GM12878 (cell line): ENCODE measurements at regions of chr2 and their contacts with region 1.

Region 1: DNA sequence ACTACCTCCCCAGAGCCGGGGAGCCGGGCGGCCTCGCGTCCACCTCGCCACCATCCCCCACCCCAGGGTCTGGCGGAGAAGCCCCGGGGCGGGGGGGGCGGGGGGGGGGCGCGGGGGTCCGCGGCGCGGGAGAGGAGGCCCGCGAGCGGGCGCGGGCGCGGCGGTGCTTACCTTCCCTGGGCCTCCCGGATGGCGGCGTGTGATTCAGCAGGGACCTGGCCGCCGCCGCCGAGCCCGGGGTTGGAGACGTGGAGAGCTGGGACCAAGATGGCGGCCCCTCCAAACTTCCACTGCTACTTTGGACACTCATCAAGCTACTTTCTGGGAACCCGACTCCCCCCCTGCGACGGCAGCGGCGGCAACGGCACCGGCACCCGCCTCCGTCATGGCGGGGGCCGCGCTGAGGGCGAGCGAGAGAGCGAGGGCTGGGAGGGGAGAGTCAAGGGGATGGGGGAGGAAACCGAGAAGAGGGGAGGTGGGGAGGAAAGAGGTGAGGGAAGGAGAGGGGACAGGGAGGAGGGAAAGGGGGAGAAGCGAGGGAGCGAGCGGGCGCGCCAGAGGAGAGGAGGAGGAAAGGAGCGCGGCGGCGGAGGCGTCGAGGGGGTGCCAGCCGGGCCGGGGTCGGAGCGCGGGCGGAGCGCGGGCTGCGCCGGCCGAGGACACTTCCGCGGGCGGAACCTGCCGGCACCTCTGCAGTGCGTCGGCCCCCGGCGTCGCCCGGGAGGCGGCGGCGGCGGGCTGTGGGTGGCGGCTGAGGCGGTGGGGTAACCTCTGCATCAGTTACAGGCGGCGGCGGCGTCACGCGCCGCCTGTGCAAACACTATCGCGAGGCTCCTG is at the start of gene TLK1:
- DNase-seq: no peak
- ATAC-seq: peak; percentile 64
- H3K4me3 ChIP-seq: peak within 1 kb of the TSS; percentile 91
- H3K27ac ChIP-seq: peak within 1 kb of the TSS; percentile 96
- H3K4me1 ChIP-seq: peaks cover 20% of the 10 kb centered on the region
- H3K27me3 ChIP-seq: no peaks in the 10 kb centered on the region
- CTCF ChIP-seq: peak in 1 of 3 experiments; percentile 14; a peak in 1 of 6 replicates
- EP300 ChIP-seq: no peak
- POLR2A ChIP-seq: peak; percentile 79
- RAD21 ChIP-seq: peak; percentile 39; the same call in 1 of the 2 replicates
- polyA plus RNA-seq, gene TLK1: 42.5 to 126 TPM

Region 2: GRCh38 chr2:170973492-170974303 is 186.6 kb before region 1 on chr2:
- CTCF ChIA-PET with region 1: interaction called, 15 read pairs
- POLR2A ChIA-PET with region 1: no interaction called
- RAD21 ChIA-PET with region 1: interaction called, 6 read pairs
- SMC1A ChIA-PET with region 1: interaction called, 5 read pairs
- in situ Hi-C with region 1: no loop called
- intact Hi-C with region 1: loop called (anchors 1 kb)
- DNase-seq: peak; percentile 64
- ATAC-seq: peak; percentile 97
- H3K4me3 ChIP-seq: peak overlapping the region; percentile 78
- H3K27ac ChIP-seq: peak overlapping the region; percentile 72
- H3K4me1 ChIP-seq: peaks cover 10% of the 10 kb centered on the region
- H3K27me3 ChIP-seq: no peaks in the 10 kb centered on the region
- CTCF ChIP-seq: peak; percentile 88 to 96 (median 89)
- EP300 ChIP-seq: peak in 1 of 2 experiments; percentile 40; a peak in 1 of 4 replicates
- POLR2A ChIP-seq: peak; percentile 74
- RAD21 ChIP-seq: peak; percentile 90

Region 3: GRCh38 chr2:171136024-171136423 is 24.3 kb before region 1 on chr2:
- CTCF ChIA-PET with region 1: interaction called, 10 read pairs
- POLR2A ChIA-PET with region 1: interaction called, 11 read pairs
- RAD21 ChIA-PET with region 1: interaction called, 16 read pairs
- SMC1A ChIA-PET with region 1: interaction called, 69 read pairs
- in situ Hi-C with region 1: no loop called
- intact Hi-C with region 1: loop called (anchors 2 kb)
- DNase-seq: peak; percentile 62
- ATAC-seq: peak; percentile 91
- H3K4me3 ChIP-seq: no peak overlapping the region
- H3K27ac ChIP-seq: peak overlapping the region; percentile 69
- H3K4me1 ChIP-seq: peaks cover 28% of the 10 kb centered on the region
- H3K27me3 ChIP-seq: no peaks in the 10 kb centered on the region
- CTCF ChIP-seq: no peak
- EP300 ChIP-seq: no peak
- POLR2A ChIP-seq: no peak
- RAD21 ChIP-seq: no peak

Region 4: GRCh38 chr2:171260471-171261424 is 100.4 kb after region 1 on chr2:
- CTCF ChIA-PET with region 1: interaction called, 4 read pairs
- POLR2A ChIA-PET with region 1: no interaction called
- RAD21 ChIA-PET with region 1: interaction called, 3 read pairs
- SMC1A ChIA-PET with region 1: interaction called, 5 read pairs
- in situ Hi-C with region 1: no loop called
- intact Hi-C with region 1: loop called (anchors 5 kb)
- DNase-seq: peak; percentile 55
- ATAC-seq: peak; percentile 81
- H3K4me3 ChIP-seq: no peak overlapping the region
- H3K27ac ChIP-seq: peak overlapping the region; percentile 73
- H3K4me1 ChIP-seq: peaks cover 20% of the 10 kb centered on the region
- H3K27me3 ChIP-seq: no peaks in the 10 kb centered on the region
- CTCF ChIP-seq: peak in 2 of 3 experiments; percentile 17 to 20; a peak in 3 of 6 replicates
- EP300 ChIP-seq: no peak
- POLR2A ChIP-seq: no peak
- RAD21 ChIP-seq: peak; percentile 60

Region 5: DNA sequence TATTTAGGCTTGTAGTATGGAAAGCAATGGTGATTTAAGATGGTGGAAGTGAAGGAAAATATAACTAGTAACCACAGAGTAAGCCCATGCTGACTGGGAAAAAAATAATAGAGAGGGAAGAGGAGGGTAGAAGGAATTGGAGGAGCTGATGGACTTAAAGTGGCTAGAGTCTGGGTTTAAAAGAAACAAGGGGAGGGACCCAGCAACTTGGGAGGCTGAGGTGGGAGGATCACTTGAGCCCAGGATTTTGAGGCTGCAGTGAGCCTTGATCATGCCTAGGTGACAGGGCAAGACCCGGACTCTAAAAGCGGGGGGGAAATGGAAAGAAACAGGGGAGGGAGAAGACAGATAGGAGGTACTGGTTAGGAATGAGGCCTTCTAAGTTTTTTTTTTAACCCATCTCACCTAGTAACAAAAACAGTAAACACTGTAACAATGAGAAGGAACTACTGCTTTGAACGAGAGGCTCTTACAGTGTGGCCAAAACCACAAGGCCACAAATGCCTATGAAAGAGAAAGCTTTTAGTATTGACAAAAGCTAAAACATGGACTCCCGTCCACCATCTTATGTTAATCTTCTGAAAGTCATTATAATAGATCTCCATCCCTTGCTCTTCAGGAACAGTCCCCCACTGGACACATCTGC is 246.8 kb after region 1 on chr2:
- CTCF ChIA-PET with region 1: interaction called, 13 read pairs
- POLR2A ChIA-PET with region 1: interaction called, 6 read pairs
- RAD21 ChIA-PET with region 1: interaction called, 5 read pairs
- SMC1A ChIA-PET with region 1: interaction called, 10 read pairs
- in situ Hi-C with region 1: no loop called
- intact Hi-C with region 1: no loop called
- DNase-seq: peak; percentile 71
- ATAC-seq: peak; percentile 75
- H3K4me3 ChIP-seq: 0 out of 2 replicates have a peak overlapping the region, but pooled peaks have one; percentile 14
- H3K27ac ChIP-seq: peak overlapping the region; percentile 93
- H3K4me1 ChIP-seq: peaks cover 64% of the 10 kb centered on the region
- H3K27me3 ChIP-seq: no peaks in the 10 kb centered on the region
- CTCF ChIP-seq: no peak
- EP300 ChIP-seq: peak; percentile 54 to 94; a peak in 3 of 4 replicates
- POLR2A ChIP-seq: no peak
- RAD21 ChIP-seq: 0 out of 2 replicates have a peak, but pooled peaks have one; percentile 14

Region 6: DNA sequence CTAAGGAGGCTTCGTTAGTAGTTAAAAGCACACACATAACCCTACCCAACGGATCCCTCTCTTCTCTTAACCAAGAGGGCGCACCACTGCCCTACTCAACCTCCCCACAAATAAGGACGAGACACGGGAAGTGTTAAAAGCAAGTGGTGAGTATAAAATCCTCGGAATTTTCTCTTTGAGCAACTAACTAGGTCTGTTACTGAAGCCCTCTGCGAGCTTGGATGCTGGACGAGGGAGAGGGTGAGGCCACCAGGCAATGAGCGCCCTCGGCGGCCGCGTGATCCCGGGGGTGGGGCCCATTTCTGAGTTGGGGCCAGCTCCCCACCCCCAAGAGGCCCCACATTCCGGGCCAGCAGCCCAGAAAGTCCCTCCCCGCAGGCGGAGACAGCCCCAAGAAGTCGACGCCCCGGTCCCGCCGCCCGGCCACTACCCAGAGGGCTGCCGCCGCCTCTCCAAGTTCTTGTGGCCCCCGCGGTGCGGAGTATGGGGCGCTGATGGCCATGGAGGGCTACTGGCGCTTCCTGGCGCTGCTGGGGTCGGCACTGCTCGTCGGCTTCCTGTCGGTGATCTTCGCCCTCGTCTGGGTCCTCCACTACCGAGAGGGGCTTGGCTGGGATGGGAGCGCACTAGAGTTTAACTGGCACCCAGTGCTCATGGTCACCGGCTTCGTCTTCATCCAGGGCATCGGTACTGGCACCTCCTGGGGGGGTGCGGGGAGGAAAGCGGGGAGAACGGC is 361.9 kb after region 1 on chr2 and contains the start of gene CYBRD1:
- CTCF ChIA-PET with region 1: no interaction called
- POLR2A ChIA-PET with region 1: no interaction called
- RAD21 ChIA-PET with region 1: no interaction called
- SMC1A ChIA-PET with region 1: no interaction called
- in situ Hi-C with region 1: no loop called
- intact Hi-C with region 1: loop called (anchors 10 kb)
- DNase-seq: no peak
- ATAC-seq: peak; percentile 79
- H3K4me3 ChIP-seq: peak within 1 kb of the TSS; percentile 95
- H3K27ac ChIP-seq: peak within 1 kb of the TSS; percentile 81
- H3K4me1 ChIP-seq: peaks cover 6% of the 10 kb centered on the region; the same call in 1 of the 2 replicates
- H3K27me3 ChIP-seq: no peaks in the 10 kb centered on the region
- CTCF ChIP-seq: 0 out of 6 replicates have a peak, but pooled peaks of 1 of the 3 experiments have one; percentile 4
- EP300 ChIP-seq: no peak
- POLR2A ChIP-seq: peak; percentile 90
- RAD21 ChIP-seq: no peak
- polyA plus RNA-seq, gene CYBRD1: 10.8 to 13.2 TPM